HepG2 (cell line): ENCODE measurements at regions of chr5 and their contacts with region 1.

Region 1: GRCh38 chr5:11619339-11620024 is 284.8 kb downstream of the CTNND2 start:
- DNase-seq: peak; percentile 61
- ATAC-seq: peak; percentile 90
- H3K4me3 ChIP-seq: no peak overlapping the region
- H3K27ac ChIP-seq: no peak overlapping the region
- H3K4me1 ChIP-seq: peaks cover 7% of the 10 kb centered on the region
- H3K27me3 ChIP-seq: no peaks in the 10 kb centered on the region; a peak in 1 of 5 replicates
- CTCF ChIP-seq: peak; percentile 71
- EP300 ChIP-seq: no peak
- POLR2A ChIP-seq: no peak
- RAD21 ChIP-seq: peak; percentile 52; the same call in 1 of the 2 replicates

Region 2: GRCh38 chr5:10987930-10988504 is 631.5 kb before region 1 on chr5:
- CTCF ChIA-PET with region 1: no interaction called
- POLR2A ChIA-PET with region 1: no interaction called
- in situ Hi-C with region 1: no loop called
- intact Hi-C with region 1: loop called (anchors 2 kb)
- DNase-seq: peak; percentile 43
- ATAC-seq: peak; percentile 99
- H3K4me3 ChIP-seq: no peak overlapping the region
- H3K27ac ChIP-seq: no peak overlapping the region
- H3K4me1 ChIP-seq: no peaks in the 10 kb centered on the region
- H3K27me3 ChIP-seq: peaks cover 0 to 5% of the 10 kb centered on the region in 2 experiments; a peak in 2 of 5 replicates
- CTCF ChIP-seq: peak; percentile 90
- EP300 ChIP-seq: no peak
- POLR2A ChIP-seq: no peak
- RAD21 ChIP-seq: peak; percentile 74

Region 3: GRCh38 chr5:11273180-11273903 is 346.1 kb before region 1 on chr5:
- CTCF ChIA-PET with region 1: interaction called, 12 read pairs
- POLR2A ChIA-PET with region 1: no interaction called
- in situ Hi-C with region 1: loop called (anchors 5 kb)
- intact Hi-C with region 1: no loop called
- DNase-seq: no peak
- ATAC-seq: no peak
- H3K4me3 ChIP-seq: no peak overlapping the region
- H3K27ac ChIP-seq: no peak overlapping the region
- H3K4me1 ChIP-seq: peaks cover 13% of the 10 kb centered on the region; the same call in 1 of the 2 replicates
- H3K27me3 ChIP-seq: no peaks in the 10 kb centered on the region
- CTCF ChIP-seq: no peak
- EP300 ChIP-seq: no peak
- POLR2A ChIP-seq: no peak
- RAD21 ChIP-seq: no peak

Region 4: DNA sequence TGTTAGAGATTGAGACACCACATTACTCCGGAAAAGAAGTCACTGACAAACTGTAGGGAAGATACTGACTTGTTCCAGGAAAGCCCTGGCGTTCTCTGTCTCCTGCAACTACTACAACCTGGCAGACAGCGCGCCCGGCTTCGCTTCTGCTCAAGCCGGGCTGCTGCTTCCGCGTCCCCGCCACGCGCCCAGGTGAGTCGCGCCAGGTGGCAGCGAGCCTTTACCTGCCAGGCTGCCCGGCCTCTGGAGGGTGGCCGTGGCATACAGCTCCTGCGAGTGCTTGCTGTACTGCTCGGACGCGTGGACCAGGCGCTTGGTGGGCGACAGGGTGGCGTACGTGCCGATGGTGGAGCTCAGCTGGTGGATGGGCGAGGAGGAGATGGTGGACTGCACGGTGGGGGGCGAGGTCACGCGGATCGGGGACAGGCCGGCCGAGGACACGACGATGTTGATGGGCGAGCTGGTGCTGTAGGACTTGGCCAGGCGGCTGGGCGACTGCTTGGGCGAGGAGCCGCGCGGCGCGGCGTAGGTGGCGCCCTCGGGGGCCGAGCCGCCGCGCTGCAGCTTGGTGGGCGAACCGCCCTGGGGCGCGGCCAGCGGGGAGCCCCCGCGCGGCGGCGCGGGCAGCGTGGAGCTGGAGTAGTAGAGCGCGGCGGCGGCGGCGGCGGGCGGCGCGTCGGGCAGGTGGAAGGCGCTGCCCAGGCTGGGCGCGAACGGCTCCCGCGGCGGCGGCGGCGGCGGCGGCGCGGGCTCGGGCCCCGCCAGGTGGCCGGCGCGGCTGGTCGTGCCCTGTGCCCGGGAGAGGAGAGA is 234.8 kb before region 1 on chr5:
- CTCF ChIA-PET with region 1: no interaction called
- POLR2A ChIA-PET with region 1: no interaction called
- in situ Hi-C with region 1: loop called (anchors 25 kb)
- intact Hi-C with region 1: loop called (anchors 10 kb)
- DNase-seq: no peak
- ATAC-seq: peak; percentile 88
- H3K4me3 ChIP-seq: peak overlapping the region in 2 of 3 experiments; percentile 40 to 66; a peak in 4 of 6 replicates
- H3K27ac ChIP-seq: no peak overlapping the region
- H3K4me1 ChIP-seq: peaks cover 6% of the 10 kb centered on the region; the same call in 1 of the 2 replicates
- H3K27me3 ChIP-seq: peaks cover 5 to 36% of the 10 kb centered on the region in 2 experiments
- CTCF ChIP-seq: peak; percentile 16; the same call in 1 of the 2 replicates
- EP300 ChIP-seq: no peak
- POLR2A ChIP-seq: no peak
- RAD21 ChIP-seq: no peak

Region 5: DNA sequence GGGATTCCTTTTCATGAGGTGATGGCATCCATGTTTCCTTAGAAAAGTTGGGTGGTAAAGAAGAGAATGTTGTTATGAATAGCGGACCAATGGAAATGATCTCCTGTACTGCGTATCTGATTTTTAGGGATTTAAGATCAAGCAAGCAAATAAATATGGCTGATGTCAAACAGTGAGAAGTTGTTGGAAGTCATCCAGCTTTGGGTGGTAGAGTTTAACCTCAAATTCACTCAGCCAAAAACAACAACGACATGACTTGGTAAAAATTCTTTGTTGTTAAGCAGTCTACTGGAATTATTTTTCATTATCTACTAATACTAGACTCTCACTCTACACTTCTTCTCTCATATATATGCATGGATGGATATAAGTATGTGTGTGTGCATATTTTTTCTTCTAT is 141.7 kb before region 1 on chr5:
- CTCF ChIA-PET with region 1: no interaction called
- POLR2A ChIA-PET with region 1: no interaction called
- in situ Hi-C with region 1: no loop called
- intact Hi-C with region 1: no loop called
- DNase-seq: no peak
- ATAC-seq: no peak
- H3K4me3 ChIP-seq: no peak overlapping the region
- H3K27ac ChIP-seq: no peak overlapping the region
- H3K4me1 ChIP-seq: no peaks in the 10 kb centered on the region
- H3K27me3 ChIP-seq: no peaks in the 10 kb centered on the region
- CTCF ChIP-seq: no peak
- EP300 ChIP-seq: no peak
- POLR2A ChIP-seq: no peak
- RAD21 ChIP-seq: no peak

Region 6: GRCh38 chr5:11504892-11505545 is 114.5 kb before region 1 on chr5:
- CTCF ChIA-PET with region 1: no interaction called
- POLR2A ChIA-PET with region 1: no interaction called
- in situ Hi-C with region 1: no loop called
- intact Hi-C with region 1: loop called (anchors 5 kb)
- DNase-seq: no peak
- ATAC-seq: no peak
- H3K4me3 ChIP-seq: no peak overlapping the region
- H3K27ac ChIP-seq: no peak overlapping the region
- H3K4me1 ChIP-seq: peaks cover 9% of the 10 kb centered on the region; the same call in 1 of the 2 replicates
- H3K27me3 ChIP-seq: no peaks in the 10 kb centered on the region; a peak in 1 of 5 replicates
- CTCF ChIP-seq: no peak
- EP300 ChIP-seq: no peak
- POLR2A ChIP-seq: no peak
- RAD21 ChIP-seq: no peak